Heart left ventricle (tissue), 16 donors: ENCODE measurements at regions of chr3 and their contacts with region 1.

Region 1: GRCh38 chr3:48194446-48195071 is 6.3 kb upstream of the CDC25A start:
- DNase-seq: peak in 3 of 5 donors; percentile 27 to 50 (median 45)
- ATAC-seq: peak in 3 of 4 donors; percentile 54 to 63 (median 58)
- H3K4me3 ChIP-seq: no peak overlapping the region
- H3K27ac ChIP-seq: no peak overlapping the region
- H3K4me1 ChIP-seq: peaks cover 0 to 3% (median 0%) of the 10 kb centered on the region in 12 donors
- H3K27me3 ChIP-seq: no peaks in the 10 kb centered on the region
- CTCF ChIP-seq: peak; percentile 53 to 70 (median 62)
- POLR2A ChIP-seq: no peak

Region 2: DNA sequence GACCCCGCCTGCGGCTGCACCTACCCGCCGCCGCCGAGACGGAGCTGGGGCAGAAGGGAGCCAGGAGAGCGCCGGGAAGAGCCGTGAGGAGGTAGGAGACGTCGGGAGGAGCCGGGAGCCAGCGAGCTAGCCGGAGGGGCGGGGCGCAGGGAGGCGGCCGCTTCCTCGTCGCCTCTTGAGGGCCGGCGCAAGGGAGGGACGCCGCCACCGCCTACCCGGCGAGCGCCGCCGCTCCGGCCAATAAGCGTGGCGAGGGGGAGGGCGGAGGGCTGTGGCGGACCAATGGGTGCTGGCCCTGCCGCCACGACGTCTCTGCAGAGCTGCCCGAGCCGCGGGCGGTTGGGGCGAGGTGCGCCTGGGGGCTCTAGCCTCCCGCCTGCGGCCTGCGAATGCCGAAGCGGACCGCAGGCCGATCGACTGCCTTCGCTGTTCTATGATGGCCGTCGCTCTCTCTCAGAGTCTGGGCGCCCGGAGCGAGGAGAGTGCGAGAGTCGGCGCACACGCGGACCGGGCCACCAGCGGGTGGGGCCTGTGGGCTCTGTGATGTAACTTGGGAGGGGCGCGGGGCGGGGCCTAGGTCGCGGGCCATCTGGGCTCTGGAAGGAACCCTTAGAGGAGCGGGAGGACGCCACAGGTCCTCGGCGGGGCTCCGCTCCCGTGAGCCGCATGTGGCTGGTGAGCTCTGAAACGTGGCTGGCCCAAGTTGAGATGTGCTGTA is 105.7 kb before region 1 on chr3:
- intact Hi-C with region 1: no loop called
- DNase-seq: peak; percentile 97 to 99 (median 98)
- ATAC-seq: peak; percentile 85 to 98 (median 94)
- H3K4me3 ChIP-seq: peak overlapping the region; percentile 55 to 100 (median 94)
- H3K27ac ChIP-seq: peak overlapping the region; percentile 90 to 100 (median 98)
- H3K4me1 ChIP-seq: peaks cover 0 to 44% (median 39%) of the 10 kb centered on the region in 12 donors
- H3K27me3 ChIP-seq: no peaks in the 10 kb centered on the region
- CTCF ChIP-seq: peak in 1 of 12 donors; percentile 10
- POLR2A ChIP-seq: peak; percentile 39 to 87

Region 3: DNA sequence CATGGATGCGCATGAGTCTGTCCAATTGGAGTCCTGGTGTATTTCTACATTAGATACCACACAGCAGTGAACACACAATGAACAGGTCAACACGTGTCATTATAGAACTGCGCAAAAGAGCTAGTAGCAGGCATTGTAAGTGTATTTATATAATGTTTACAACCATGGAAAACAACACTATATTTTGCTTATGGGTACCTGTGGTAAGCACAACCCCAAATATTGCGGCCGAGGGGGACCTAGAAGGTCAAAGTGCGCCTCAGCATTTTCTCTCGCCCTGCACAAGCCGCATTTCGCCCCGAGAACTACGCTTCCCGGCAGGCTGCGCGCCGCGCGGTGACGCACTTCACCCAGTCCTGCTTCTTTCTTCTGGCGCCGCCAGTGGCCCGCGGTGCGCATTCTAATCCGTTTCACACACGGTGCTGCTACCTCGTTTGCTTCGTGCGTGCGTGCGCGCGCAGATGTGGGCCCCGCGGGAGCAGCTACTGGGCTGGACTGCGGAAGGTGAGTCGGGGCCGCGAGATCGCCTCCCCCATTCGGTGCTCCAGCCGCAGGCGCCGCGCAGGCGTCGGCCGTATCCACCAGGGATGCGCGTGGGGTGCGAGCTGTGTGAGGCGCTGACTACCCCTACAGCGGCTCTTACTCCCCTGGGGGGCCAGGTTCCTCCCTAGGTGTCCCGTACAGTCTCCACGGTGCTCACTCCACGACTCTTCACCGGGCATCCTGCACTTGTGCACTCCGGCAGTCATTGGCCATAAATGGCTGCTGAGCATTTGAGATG is 46.3 kb after region 1 on chr3 and contains the start of gene ZNF589:
- intact Hi-C with region 1: loop called in 1 of 10 experiments (anchors 10 kb)
- DNase-seq: peak; percentile 89 to 93 (median 93)
- ATAC-seq: peak; percentile 92 to 97 (median 97)
- H3K4me3 ChIP-seq: peak within 1 kb of the TSS; percentile 64 to 94 (median 81)
- H3K27ac ChIP-seq: peak within 1 kb of the TSS; percentile 22 to 89 (median 76)
- H3K4me1 ChIP-seq: peaks cover 0 to 28% (median 11%) of the 10 kb centered on the region in 12 donors
- H3K27me3 ChIP-seq: no peaks in the 10 kb centered on the region
- CTCF ChIP-seq: peak in 7 of 12 donors; percentile 16 to 55 (median 25)
- POLR2A ChIP-seq: peak in 1 of 2 donors; percentile 79
- total RNA-seq, gene ZNF589: 2.7 to 7.5 (median 4.8) TPM